A549 (cell line): ENCODE measurements at regions of chr15 and their contacts with region 1.

Region 1: GRCh38 chr15:90265271-90266060 is at the start of gene NGRN:
- DNase-seq: peak; percentile 91 to 96
- ATAC-seq: peak; percentile 96 to 97
- H3K4me3 ChIP-seq: peak within 1 kb of the TSS; percentile 77
- H3K27ac ChIP-seq: peak within 1 kb of the TSS; percentile 86 to 97
- H3K4me1 ChIP-seq: peaks cover 37% of the 10 kb centered on the region
- CTCF ChIP-seq: no peak
- EP300 ChIP-seq: no peak
- POLR2A ChIP-seq: peak; percentile 95
- RAD21 ChIP-seq: no peak; a peak in 1 of 5 replicates
- polyA plus RNA-seq, gene NGRN: 156 and 159 TPM in 2 replicates

Region 2: GRCh38 chr15:90249203-90249863 is 16.1 kb before region 1 on chr15 and contains the start of gene TTLL13:
- CTCF ChIA-PET with region 1: interaction called, 14 read pairs
- POLR2A ChIA-PET with region 1: interaction called, 20 read pairs
- DNase-seq: peak; percentile 92 to 95
- ATAC-seq: peak; percentile 97 to 98
- H3K4me3 ChIP-seq: peak within 1 kb of the TSS; percentile 69
- H3K27ac ChIP-seq: peak within 1 kb of the TSS; percentile 83 to 86
- H3K4me1 ChIP-seq: peaks cover 12% of the 10 kb centered on the region
- CTCF ChIP-seq: no peak
- EP300 ChIP-seq: no peak
- POLR2A ChIP-seq: peak; percentile 93
- RAD21 ChIP-seq: no peak
- polyA plus RNA-seq, gene TTLL13: 0.56 and 0.61 TPM in 2 replicates

Region 3: GRCh38 chr15:90716976-90717821 is 451.7 kb after region 1 on chr15 and contains the start of gene BLM:
- CTCF ChIA-PET with region 1: no interaction called
- POLR2A ChIA-PET with region 1: no interaction called
- DNase-seq: peak; percentile 98 to 100
- ATAC-seq: peak; percentile 99 to 100
- H3K4me3 ChIP-seq: peak within 1 kb of the TSS; percentile 72
- H3K27ac ChIP-seq: peak within 1 kb of the TSS; percentile 81 to 84
- H3K4me1 ChIP-seq: peaks cover 12% of the 10 kb centered on the region; the same call in 1 of the 3 replicates
- CTCF ChIP-seq: no peak
- EP300 ChIP-seq: no peak
- POLR2A ChIP-seq: peak; percentile 64
- RAD21 ChIP-seq: 0 out of 5 replicates have a peak, but pooled peaks of 1 of the 2 experiments have one; percentile 9
- polyA plus RNA-seq, gene BLM: 14.5 and 15.2 TPM in 2 replicates